ENCODE measurements at regions of chr9 and their contacts with region 1.

Region 1: DNA sequence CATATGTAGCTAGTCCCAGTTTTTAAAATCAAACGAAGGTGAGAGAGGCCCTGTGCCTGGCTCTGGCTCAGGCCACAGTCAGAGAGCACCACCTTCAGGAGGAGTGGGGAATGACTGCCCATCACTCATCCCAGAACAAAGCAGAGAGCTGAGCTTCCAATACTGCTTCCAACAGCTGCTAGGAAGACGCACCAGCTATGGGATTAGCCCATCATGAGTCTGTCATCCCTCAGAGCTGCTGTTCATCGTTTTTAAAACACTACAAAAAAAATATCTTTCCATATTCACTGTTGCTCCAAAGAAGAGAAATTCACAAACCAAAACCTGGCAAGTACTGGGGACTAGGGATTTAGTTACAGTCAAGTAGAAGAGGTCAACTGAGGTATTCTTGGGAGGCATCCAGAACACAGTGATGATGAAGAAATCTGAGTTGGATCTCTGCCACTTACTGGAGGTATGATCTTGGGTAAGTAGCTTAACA is 102.4 kb downstream of the CDK5RAP2 start:
- DNase-seq: peak; percentile 64
- H3K4me3 ChIP-seq: peak overlapping the region in 1 of 2 experiments; percentile 4; a peak in 1 of 4 replicates
- H3K27ac ChIP-seq: no peak overlapping the region
- H3K4me1 ChIP-seq: peaks cover 11 to 12% of the 10 kb centered on the region in 2 experiments; a peak in 2 of 4 replicates
- H3K27me3 ChIP-seq: no peaks in the 10 kb centered on the region
- CTCF ChIP-seq: peak; percentile 99
- EP300 ChIP-seq: no peak
- RAD21 ChIP-seq: peak; percentile 86

Region 2: GRCh38 chr9:119375892-119376291 is 1101.7 kb before region 1 on chr9:
- CTCF ChIA-PET with region 1: interaction called, 11 read pairs
- POLR2A ChIA-PET with region 1: no interaction called
- DNase-seq: peak; percentile 32
- H3K4me3 ChIP-seq: peak overlapping the region in 1 of 2 experiments; percentile 37; a peak in 1 of 4 replicates
- H3K27ac ChIP-seq: no peak overlapping the region
- H3K4me1 ChIP-seq: no peaks in the 10 kb centered on the region
- H3K27me3 ChIP-seq: no peaks in the 10 kb centered on the region
- CTCF ChIP-seq: peak; percentile 63
- EP300 ChIP-seq: no peak
- RAD21 ChIP-seq: peak; percentile 52

Region 3: DNA sequence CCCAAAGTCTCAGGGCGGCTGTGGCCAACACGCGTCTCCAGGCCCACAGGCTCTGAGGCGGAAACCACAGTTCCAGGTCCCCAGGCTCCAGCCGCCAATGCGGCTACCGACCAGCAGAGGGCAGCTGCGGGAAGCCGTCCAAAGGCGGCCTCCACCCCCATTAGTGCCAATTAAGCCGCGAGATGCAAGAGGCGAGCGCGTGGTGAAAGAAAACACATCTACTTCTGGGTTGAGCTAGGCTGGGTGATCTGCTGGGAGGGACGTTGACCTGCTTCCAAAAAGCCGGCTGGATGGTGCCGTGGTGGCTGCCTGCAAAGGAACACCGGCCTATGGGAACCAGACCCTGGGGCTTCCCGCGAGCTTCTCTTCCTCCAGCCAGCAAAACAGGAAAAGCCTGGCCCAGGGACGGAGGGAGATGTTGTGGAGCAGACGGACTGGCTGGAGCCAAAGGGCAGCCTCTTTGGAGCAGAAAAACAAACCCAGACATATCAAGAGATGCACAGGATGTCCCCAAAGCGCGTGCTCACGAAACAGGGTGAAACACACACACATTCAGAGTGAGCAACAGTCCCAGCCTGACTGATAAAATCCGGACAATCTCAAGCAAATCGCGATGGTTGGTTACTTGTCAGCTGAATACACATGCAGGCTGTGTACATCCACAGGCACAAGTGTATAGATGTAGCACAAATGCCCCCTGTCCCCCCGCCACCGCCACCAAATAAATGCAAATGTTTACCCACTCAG is 921.3 kb before region 1 on chr9:
- CTCF ChIA-PET with region 1: interaction called, 12 read pairs
- POLR2A ChIA-PET with region 1: no interaction called
- DNase-seq: peak; percentile 81
- H3K4me3 ChIP-seq: peak overlapping the region; percentile 41 to 62
- H3K27ac ChIP-seq: peak overlapping the region in 1 of 2 experiments; percentile 86; a peak in 2 of 4 replicates
- H3K4me1 ChIP-seq: peaks cover 0 to 10% of the 10 kb centered on the region in 2 experiments; a peak in 1 of 4 replicates
- H3K27me3 ChIP-seq: no peaks in the 10 kb centered on the region
- CTCF ChIP-seq: peak; percentile 86
- EP300 ChIP-seq: no peak
- RAD21 ChIP-seq: peak; percentile 76

Region 4: DNA sequence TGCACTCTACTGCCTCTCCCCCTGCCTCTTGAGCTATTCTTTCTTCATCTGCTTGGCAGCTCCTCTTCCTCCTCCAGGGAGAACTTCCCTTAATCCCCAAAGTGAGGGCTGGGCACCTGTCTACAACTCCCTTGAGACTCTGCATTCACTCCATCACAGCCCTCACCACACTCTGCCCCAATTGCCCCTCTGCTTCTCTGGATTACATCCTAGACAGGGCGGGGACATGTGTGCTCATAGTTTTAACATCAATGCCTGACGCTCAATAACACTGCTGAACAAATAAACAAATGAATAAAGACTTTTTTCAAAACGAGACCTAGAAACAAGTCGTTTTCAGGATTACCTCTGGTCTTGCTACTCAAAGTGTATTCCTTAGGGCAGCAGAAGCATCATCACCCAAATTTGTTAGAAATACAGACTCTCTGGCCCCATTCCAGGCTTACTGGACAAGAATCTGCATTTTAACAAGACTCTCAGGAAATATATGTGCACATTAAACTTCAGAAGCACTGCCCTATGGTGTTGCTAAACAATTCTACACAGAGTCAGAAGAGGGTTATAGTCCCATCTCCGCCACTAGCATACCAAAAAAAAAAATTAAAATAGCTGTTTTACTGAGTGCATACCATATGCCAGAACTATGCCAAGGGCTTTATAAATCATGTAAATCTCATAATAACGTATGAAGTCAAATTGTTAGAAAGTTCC is 13.2 kb before region 1 on chr9:
- CTCF ChIA-PET with region 1: interaction called, 19 read pairs
- POLR2A ChIA-PET with region 1: no interaction called
- DNase-seq: no peak
- H3K4me3 ChIP-seq: no peak overlapping the region
- H3K27ac ChIP-seq: no peak overlapping the region
- H3K4me1 ChIP-seq: no peaks in the 10 kb centered on the region; a peak in 1 of 4 replicates
- H3K27me3 ChIP-seq: no peaks in the 10 kb centered on the region
- CTCF ChIP-seq: no peak
- EP300 ChIP-seq: no peak
- RAD21 ChIP-seq: no peak

Region 5: GRCh38 chr9:120528834-120529233 is 51.3 kb after region 1 on chr9:
- CTCF ChIA-PET with region 1: interaction called, 13 read pairs
- POLR2A ChIA-PET with region 1: no interaction called
- DNase-seq: no peak
- H3K4me3 ChIP-seq: no peak overlapping the region
- H3K27ac ChIP-seq: no peak overlapping the region
- H3K4me1 ChIP-seq: no peaks in the 10 kb centered on the region; a peak in 1 of 4 replicates
- H3K27me3 ChIP-seq: no peaks in the 10 kb centered on the region
- CTCF ChIP-seq: no peak
- EP300 ChIP-seq: no peak
- RAD21 ChIP-seq: no peak